Panc1 (cell line): ENCODE measurements at regions of chr6 and their contacts with region 1.

Region 1: GRCh38 chr6:28683944-28684538 is 158.4 kb downstream of the GPX5 start:
- DNase-seq: peak; percentile 18
- ATAC-seq: peak; percentile 96
- H3K4me3 ChIP-seq: peak overlapping the region; percentile 5 to 45; a peak in 3 of 4 replicates
- H3K27ac ChIP-seq: peak overlapping the region; percentile 29; the same call in 1 of the 2 replicates
- H3K4me1 ChIP-seq: peaks cover 4% of the 10 kb centered on the region
- H3K27me3 ChIP-seq: peaks cover 2% of the 10 kb centered on the region; the same call in 1 of the 2 replicates
- CTCF ChIP-seq: peak; percentile 83

Region 2: GRCh38 chr6:28399350-28400121 is 284.5 kb before region 1 on chr6 and contains the start of gene ZSCAN12:
- CTCF ChIA-PET with region 1: no interaction called
- POLR2A ChIA-PET with region 1: no interaction called
- in situ Hi-C with region 1: no loop called
- intact Hi-C with region 1: loop called (anchors 10 kb)
- DNase-seq: no peak
- ATAC-seq: peak; percentile 93
- H3K4me3 ChIP-seq: peak within 1 kb of the TSS; percentile 74 to 90
- H3K27ac ChIP-seq: peak within 1 kb of the TSS; percentile 77
- H3K4me1 ChIP-seq: no peaks in the 10 kb centered on the region
- H3K27me3 ChIP-seq: peaks cover 4% of the 10 kb centered on the region; the same call in 1 of the 2 replicates
- CTCF ChIP-seq: peak; percentile 67
- total RNA-seq, gene ZSCAN12: 3.2 TPM

Region 3: GRCh38 chr6:28496099-28496779 is 187.8 kb before region 1 on chr6:
- CTCF ChIA-PET with region 1: no interaction called
- POLR2A ChIA-PET with region 1: no interaction called
- in situ Hi-C with region 1: no loop called
- intact Hi-C with region 1: loop called (anchors 2 kb)
- DNase-seq: no peak
- ATAC-seq: no peak
- H3K4me3 ChIP-seq: no peak overlapping the region
- H3K27ac ChIP-seq: no peak overlapping the region
- H3K4me1 ChIP-seq: no peaks in the 10 kb centered on the region
- H3K27me3 ChIP-seq: peaks cover 2% of the 10 kb centered on the region; the same call in 1 of the 2 replicates
- CTCF ChIP-seq: peak; percentile 56

Region 4: GRCh38 chr6:28747631-28748157 is 63.7 kb after region 1 on chr6:
- CTCF ChIA-PET with region 1: no interaction called
- POLR2A ChIA-PET with region 1: no interaction called
- in situ Hi-C with region 1: no loop called
- intact Hi-C with region 1: no loop called
- DNase-seq: peak; percentile 95
- ATAC-seq: peak; percentile 99
- H3K4me3 ChIP-seq: peak overlapping the region; percentile 65 to 88
- H3K27ac ChIP-seq: no peak overlapping the region
- H3K4me1 ChIP-seq: peaks cover 21% of the 10 kb centered on the region
- H3K27me3 ChIP-seq: no peaks in the 10 kb centered on the region
- CTCF ChIP-seq: no peak

Region 5: DNA sequence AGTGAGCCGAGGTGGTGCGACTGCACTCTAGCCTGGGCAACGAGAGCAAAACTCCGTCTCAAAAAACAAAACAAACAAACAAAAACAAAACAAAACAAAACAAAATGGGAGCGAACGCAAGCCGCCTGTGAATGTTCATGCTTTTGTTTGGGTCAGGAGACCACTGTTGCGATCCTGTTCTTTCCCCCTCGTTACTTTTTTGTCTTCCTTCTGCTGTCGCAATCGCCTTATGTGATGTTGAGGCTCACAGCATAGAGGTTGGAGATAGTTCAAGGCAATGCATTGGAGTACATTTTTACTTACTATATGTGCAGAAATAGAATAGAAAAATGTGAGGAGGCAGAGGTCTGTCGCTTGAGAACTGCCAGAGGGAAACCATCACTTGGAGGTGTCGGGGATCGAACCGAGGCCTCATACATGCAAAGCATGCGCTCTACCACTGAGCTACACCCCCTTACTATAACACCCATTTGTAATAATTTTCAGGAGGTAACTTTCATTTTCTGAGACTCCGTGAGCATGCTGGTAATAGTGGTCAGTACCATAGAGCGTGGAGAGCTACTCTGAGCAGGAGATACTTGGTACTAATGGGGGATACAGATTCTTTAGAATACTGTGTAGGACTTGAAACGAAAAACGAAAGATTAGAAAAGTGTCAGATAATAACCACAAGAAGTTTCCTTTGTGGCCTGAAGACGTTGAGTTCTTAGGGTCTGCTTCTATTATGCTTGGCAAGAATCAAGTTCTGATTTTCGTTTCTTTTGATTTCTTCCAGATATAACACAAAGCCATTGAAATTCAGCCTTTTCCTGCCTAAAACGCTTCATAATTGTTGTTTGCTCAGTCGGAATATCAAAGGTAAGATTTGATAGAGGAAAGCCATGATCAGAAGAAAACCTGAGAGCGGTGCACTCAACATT is 118.6 kb after region 1 on chr6:
- CTCF ChIA-PET with region 1: no interaction called
- POLR2A ChIA-PET with region 1: no interaction called
- in situ Hi-C with region 1: no loop called
- intact Hi-C with region 1: loop called (anchors 5 kb)
- DNase-seq: peak; percentile 97
- ATAC-seq: peak; percentile 98
- H3K4me3 ChIP-seq: peak overlapping the region; percentile 61 to 92
- H3K27ac ChIP-seq: peak overlapping the region; percentile 41; the same call in 1 of the 2 replicates
- H3K4me1 ChIP-seq: peaks cover 17% of the 10 kb centered on the region
- H3K27me3 ChIP-seq: no peaks in the 10 kb centered on the region
- CTCF ChIP-seq: no peak